ENCODE measurements at regions of chr14 and their contacts with region 1.

Region 1: GRCh38 chr14:99982537-99983250 is 82.5 kb upstream of the EVL start:
- DNase-seq: peak; percentile 51
- H3K4me3 ChIP-seq: no peak overlapping the region
- H3K27ac ChIP-seq: no peak overlapping the region
- H3K4me1 ChIP-seq: peaks cover 3% of the 10 kb centered on the region
- H3K27me3 ChIP-seq: no peaks in the 10 kb centered on the region
- CTCF ChIP-seq: peak; percentile 53 to 92 (median 82)
- POLR2A ChIP-seq: no peak

Region 2: DNA sequence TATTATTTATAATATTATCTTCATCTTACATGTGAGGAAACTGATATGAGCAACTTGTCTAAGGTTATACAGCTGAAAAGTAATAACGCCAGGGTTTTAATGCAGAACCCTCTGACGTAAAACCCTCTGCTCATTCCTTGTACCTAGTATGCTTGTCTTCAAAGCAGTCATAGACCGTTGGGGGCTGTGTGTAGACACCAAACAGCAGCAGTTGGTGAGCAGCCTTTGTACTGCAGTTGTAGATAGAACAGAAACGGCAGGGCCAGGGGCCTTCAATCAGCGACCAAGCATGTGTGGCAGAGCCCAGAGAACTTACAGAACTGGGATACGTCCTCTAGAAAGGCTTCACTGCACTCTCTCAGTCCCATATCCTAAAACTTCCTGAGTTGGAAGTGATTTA is 110.6 kb after region 1 on chr14:
- intact Hi-C with region 1: no loop called
- DNase-seq: no peak
- H3K4me3 ChIP-seq: no peak overlapping the region
- H3K27ac ChIP-seq: no peak overlapping the region
- H3K4me1 ChIP-seq: no peaks in the 10 kb centered on the region
- H3K27me3 ChIP-seq: no peaks in the 10 kb centered on the region
- CTCF ChIP-seq: no peak
- POLR2A ChIP-seq: no peak

Region 3: GRCh38 chr14:100192672-100193416 is 210.2 kb after region 1 on chr14:
- intact Hi-C with region 1: loop called (anchors 1 kb)
- DNase-seq: peak; percentile 100
- H3K4me3 ChIP-seq: peak overlapping the region; percentile 26 to 27
- H3K27ac ChIP-seq: peak overlapping the region; percentile 87 to 88
- H3K4me1 ChIP-seq: peaks cover 6% of the 10 kb centered on the region
- H3K27me3 ChIP-seq: no peaks in the 10 kb centered on the region
- CTCF ChIP-seq: peak; percentile 93 to 98 (median 98)
- POLR2A ChIP-seq: peak; percentile 64

Measured in prostate gland (tissue), 2 donors.